Activated CD4-positive, alpha-beta memory T cell treated with anti-CD3 and anti-CD28 coated beads for 36 hours (primary cell): ENCODE measurements at regions of chr18 and their contacts with region 1.

Region 1: GRCh38 chr18:62425465-62426195 is 97.2 kb upstream of the ZCCHC2 start:
- DNase-seq: peak; percentile 70
- H3K4me3 Mint-ChIP-seq: no peak overlapping the region
- H3K27ac Mint-ChIP-seq: no peak overlapping the region
- H3K4me1 Mint-ChIP-seq: peaks cover 30% of the 10 kb centered on the region
- H3K27me3 Mint-ChIP-seq: peaks cover 1% of the 10 kb centered on the region

Region 2: DNA sequence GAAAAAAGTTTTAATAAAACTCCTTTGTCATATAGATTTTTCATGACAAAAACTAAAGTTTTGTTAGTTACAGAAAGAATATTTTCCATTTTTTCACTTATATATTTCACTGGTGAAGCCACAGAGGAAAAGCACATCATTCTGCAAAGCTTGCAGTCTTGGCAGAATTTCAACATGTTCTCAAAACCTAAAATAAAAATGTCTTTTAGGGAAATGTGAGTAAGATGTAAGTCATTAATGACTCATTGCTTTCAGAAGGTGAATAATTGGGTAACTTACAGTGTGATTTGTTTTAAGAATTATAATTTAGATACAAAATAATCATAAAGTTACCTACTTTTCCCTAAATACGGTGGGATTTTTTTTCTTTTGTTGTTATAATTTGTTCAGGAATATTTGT is 143.9 kb before region 1 on chr18:
- CTCF ChIA-PET with region 1: no interaction called
- POLR2A ChIA-PET with region 1: interaction called, 3 read pairs
- intact Hi-C with region 1: loop called (anchors 2 kb)
- DNase-seq: no peak
- H3K4me3 Mint-ChIP-seq: no peak overlapping the region
- H3K27ac Mint-ChIP-seq: no peak overlapping the region
- H3K4me1 Mint-ChIP-seq: peaks cover 33% of the 10 kb centered on the region
- H3K27me3 Mint-ChIP-seq: no peaks in the 10 kb centered on the region

Region 3: DNA sequence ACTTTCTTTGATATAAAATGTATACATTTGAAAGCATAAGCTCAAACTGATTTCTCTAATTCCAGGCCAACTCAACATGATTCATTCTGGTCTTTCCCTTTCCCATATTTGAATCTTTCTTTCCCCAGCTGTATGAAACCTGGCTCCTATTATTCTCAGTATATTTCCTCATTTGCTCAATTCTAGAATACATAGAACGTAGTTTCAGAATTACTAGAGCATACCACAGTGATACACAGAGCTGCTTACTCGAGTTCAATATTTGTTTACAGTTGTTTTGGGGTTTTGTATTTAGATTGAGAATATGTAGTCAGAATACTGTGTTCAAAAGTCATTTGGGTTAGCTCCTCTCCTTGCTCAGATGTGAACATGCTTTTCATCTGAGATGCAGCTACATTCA is 57.5 kb before region 1 on chr18:
- CTCF ChIA-PET with region 1: interaction called, 5 read pairs
- POLR2A ChIA-PET with region 1: no interaction called
- intact Hi-C with region 1: loop called (anchors 1 kb)
- DNase-seq: no peak
- H3K4me3 Mint-ChIP-seq: no peak overlapping the region
- H3K27ac Mint-ChIP-seq: no peak overlapping the region
- H3K4me1 Mint-ChIP-seq: peaks cover 15% of the 10 kb centered on the region
- H3K27me3 Mint-ChIP-seq: peaks cover 3% of the 10 kb centered on the region

Region 4: GRCh38 chr18:62437235-62438017 is 11.8 kb after region 1 on chr18:
- CTCF ChIA-PET with region 1: interaction called, 27 read pairs
- POLR2A ChIA-PET with region 1: interaction called, 3 read pairs
- intact Hi-C with region 1: no loop called
- DNase-seq: no peak
- H3K4me3 Mint-ChIP-seq: no peak overlapping the region
- H3K27ac Mint-ChIP-seq: no peak overlapping the region
- H3K4me1 Mint-ChIP-seq: no peaks in the 10 kb centered on the region
- H3K27me3 Mint-ChIP-seq: peaks cover 2% of the 10 kb centered on the region

Region 5: DNA sequence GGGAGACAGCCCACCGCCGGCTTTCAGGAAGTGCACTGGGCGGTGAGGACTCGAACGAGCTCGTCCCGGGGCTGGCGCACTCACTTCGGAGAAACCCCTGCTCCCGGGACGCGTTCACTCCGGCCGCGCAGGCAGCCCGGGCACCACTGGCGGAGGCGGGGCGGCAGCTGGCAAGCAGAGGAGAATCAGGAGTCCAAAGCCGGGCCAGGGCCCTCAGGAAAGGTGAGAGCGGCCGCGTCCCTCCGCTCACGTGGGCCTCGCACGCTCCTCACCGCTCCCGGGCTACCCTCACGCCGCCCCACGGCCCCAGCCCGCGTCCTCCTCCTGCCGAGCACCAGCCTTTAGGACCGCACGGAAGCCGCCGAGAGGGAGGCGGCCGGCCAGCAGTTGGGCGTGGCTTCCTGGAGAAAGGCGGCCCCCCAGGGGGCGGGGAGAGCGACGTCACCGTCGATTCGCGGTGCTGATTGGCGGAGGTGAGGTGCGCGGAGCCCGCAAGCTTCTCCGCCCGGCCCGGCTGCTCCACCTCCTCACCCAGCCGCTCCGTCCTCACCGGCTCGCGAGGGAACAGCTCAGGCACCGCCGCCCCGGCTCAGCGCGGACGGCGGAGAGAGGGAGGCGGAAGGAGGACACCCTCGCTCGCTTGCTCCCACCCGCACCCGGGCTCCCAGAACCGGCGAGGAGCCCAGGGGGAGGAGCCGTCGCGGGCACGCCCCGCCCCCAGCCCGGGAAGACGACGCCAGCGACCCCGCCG is 97.0 kb after region 1 on chr18 and contains the start of gene ZCCHC2:
- CTCF ChIA-PET with region 1: interaction called, 20 read pairs
- POLR2A ChIA-PET with region 1: interaction called, 9 read pairs
- intact Hi-C with region 1: loop called (anchors 1 kb)
- DNase-seq: peak; percentile 99
- H3K4me3 Mint-ChIP-seq: peak within 1 kb of the TSS; percentile 94
- H3K27ac Mint-ChIP-seq: peak within 1 kb of the TSS; percentile 94
- H3K4me1 Mint-ChIP-seq: peaks cover 16% of the 10 kb centered on the region
- H3K27me3 Mint-ChIP-seq: no peaks in the 10 kb centered on the region
- total RNA-seq, gene ZCCHC2: 24.9 to 27.5 TPM

Region 6: GRCh38 chr18:62982600-62983251 is 557.1 kb after region 1 on chr18:
- CTCF ChIA-PET with region 1: interaction called, 11 read pairs
- POLR2A ChIA-PET with region 1: no interaction called
- intact Hi-C with region 1: no loop called
- DNase-seq: peak; percentile 66
- H3K4me3 Mint-ChIP-seq: no peak overlapping the region
- H3K27ac Mint-ChIP-seq: no peak overlapping the region
- H3K4me1 Mint-ChIP-seq: no peaks in the 10 kb centered on the region
- H3K27me3 Mint-ChIP-seq: no peaks in the 10 kb centered on the region